Endothelial cell of umbilical vein (primary cell): ENCODE measurements at regions of chr2 and their contacts with region 1.

Region 1: DNA sequence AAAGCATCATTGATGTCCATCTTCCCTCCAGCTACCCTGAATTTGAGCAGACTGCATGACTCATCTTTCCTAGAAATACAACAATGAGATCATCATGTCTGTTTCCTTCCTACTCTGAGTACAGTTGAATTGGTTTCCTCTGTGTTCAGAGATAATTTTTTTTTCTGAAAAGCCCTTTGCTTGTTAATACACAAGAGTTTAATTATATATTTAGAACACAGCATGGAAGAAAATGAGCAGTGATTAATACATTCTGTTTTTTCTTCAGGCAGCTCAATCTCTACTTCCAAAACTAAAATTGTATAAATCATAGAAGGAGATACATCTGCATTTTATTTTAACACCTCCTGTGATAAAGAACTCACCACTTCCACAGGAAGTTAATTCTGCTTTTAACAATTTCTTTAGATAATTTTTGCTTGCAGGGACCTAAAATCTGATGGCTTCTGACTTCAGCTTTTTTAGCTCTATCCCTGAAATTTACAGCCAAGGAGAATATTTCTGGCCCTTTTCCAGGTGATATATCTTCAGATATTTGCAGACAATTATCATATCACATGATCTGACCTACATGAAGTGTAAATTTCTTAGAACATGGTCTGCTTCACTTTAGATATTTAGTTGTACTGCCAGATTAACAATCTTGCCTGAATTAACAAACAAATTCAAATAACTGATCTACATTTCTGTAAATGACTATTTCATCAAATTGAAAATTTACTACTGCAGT is 249.0 kb downstream of the TRIB2 start:
- DNase-seq: peak; percentile 84
- H3K4me3 ChIP-seq: peak overlapping the region in 1 of 3 experiments; percentile 30
- H3K27ac ChIP-seq: peak overlapping the region; percentile 67
- H3K4me1 ChIP-seq: peaks cover 17% of the 10 kb centered on the region
- H3K27me3 ChIP-seq: no peaks in the 10 kb centered on the region
- CTCF ChIP-seq: no peak
- POLR2A ChIP-seq: peak; percentile 43

Region 2: DNA sequence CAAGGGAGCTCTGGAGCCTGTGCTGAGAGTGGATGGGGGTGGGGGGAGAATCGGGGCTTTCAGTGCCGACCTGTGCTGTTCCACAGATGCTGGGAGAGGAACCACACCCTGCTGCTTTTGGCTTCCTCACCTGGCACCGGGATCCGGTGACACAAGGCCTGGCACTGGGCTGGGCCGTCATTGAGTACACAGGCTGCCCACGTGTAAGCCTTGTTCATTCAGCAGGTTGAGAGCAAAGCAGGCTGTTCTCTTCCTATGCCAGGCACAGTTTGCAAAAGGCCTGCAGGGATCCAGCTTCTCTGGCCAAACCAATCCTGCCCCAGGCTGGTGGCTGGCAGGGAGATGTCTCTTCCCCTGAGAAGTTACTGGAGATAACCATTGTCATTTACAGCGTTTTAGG is 231.9 kb before region 1 on chr2:
- CTCF ChIA-PET with region 1: no interaction called
- POLR2A ChIA-PET with region 1: no interaction called
- dilution Hi-C with region 1: no loop called
- intact Hi-C with region 1: no loop called
- DNase-seq: no peak
- H3K4me3 ChIP-seq: no peak overlapping the region
- H3K27ac ChIP-seq: no peak overlapping the region
- H3K4me1 ChIP-seq: peaks cover 2% of the 10 kb centered on the region
- H3K27me3 ChIP-seq: no peaks in the 10 kb centered on the region
- CTCF ChIP-seq: no peak
- POLR2A ChIP-seq: no peak

Region 3: DNA sequence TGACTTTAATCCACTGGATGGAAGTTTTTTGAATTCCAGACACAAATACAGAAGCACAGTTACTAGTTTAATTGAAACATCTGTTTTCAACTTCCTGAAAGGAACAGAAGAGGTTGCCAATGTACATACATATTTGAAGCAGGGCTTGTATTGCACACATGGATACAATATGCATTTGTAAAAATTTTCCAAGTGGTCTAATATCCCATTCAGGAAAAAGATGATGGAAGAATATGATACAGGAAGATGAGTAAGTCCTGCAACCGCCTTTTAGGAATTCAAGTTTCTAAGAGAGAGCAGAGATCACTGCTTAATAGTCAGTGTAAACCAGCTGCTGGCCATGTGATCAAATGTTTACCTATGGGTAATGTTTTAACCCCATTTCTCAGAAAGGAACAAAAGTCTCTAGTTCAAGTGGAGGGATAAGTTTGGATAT is 16.5 kb after region 1 on chr2:
- CTCF ChIA-PET with region 1: interaction called, 4 read pairs
- POLR2A ChIA-PET with region 1: no interaction called
- dilution Hi-C with region 1: no loop called
- intact Hi-C with region 1: loop called (anchors 1 kb)
- DNase-seq: peak; percentile 90
- H3K4me3 ChIP-seq: no peak overlapping the region
- H3K27ac ChIP-seq: peak overlapping the region; percentile 50
- H3K4me1 ChIP-seq: peaks cover 28% of the 10 kb centered on the region
- H3K27me3 ChIP-seq: no peaks in the 10 kb centered on the region
- CTCF ChIP-seq: no peak
- POLR2A ChIP-seq: no peak